Natural killer cell (primary cell): ENCODE measurements at regions of chr3 and their contacts with region 1.

Region 1: GRCh38 chr3:160399125-160400029 is at the starts of genes IFT80 and SMC4:
- DNase-seq: peak; percentile 95 to 98
- ATAC-seq: peak; percentile 93 to 99 (median 95)
- H3K4me3 ChIP-seq: peak within 1 kb of the TSS; percentile 94
- H3K4me3 Mint-ChIP-seq: peak within 1 kb of the TSS; percentile 99
- H3K27ac ChIP-seq: peak within 1 kb of the TSS; percentile 71
- H3K27ac Mint-ChIP-seq: peak within 1 kb of the TSS; percentile 98 to 100
- H3K4me1 ChIP-seq: peaks cover 13% of the 10 kb centered on the region
- H3K4me1 Mint-ChIP-seq: peaks cover 46 to 53% of the 10 kb centered on the region in 2 donors
- H3K27me3 ChIP-seq: no peaks in the 10 kb centered on the region
- H3K27me3 Mint-ChIP-seq: no peaks in the 10 kb centered on the region
- CTCF ChIP-seq: no peak
- total RNA-seq, gene IFT80: 22.6 to 22.9 (median 22.9) TPM
- total RNA-seq, gene SMC4: 83.4 to 99.3 (median 92.0) TPM

Region 2: DNA sequence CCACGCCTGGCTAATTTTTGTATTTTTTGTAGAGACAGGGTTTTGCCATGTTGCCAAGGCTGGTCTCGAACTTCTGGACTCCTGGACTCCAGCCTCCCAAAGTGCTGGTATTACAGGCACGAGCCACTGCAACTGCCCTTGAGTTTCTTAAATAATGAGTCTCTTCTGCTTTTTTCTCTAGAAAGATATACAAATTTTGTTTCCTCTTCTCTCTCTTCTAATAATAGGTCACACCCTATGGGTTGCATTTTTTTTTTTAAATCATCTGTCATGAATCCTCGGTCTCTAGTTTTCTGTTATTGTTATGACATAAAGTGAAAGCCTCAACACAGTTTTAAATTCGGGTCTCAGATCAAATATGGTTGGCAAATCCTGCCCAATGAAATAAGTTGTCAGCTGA is 299.5 kb before region 1 on chr3:
- intact Hi-C with region 1: no loop called
- DNase-seq: no peak
- ATAC-seq: no peak
- H3K4me3 ChIP-seq: no peak overlapping the region
- H3K4me3 Mint-ChIP-seq: no peak overlapping the region
- H3K27ac ChIP-seq: no peak overlapping the region
- H3K27ac Mint-ChIP-seq: no peak overlapping the region
- H3K4me1 ChIP-seq: no peaks in the 10 kb centered on the region
- H3K4me1 Mint-ChIP-seq: no peaks in the 10 kb centered on the region
- H3K27me3 ChIP-seq: no peaks in the 10 kb centered on the region
- H3K27me3 Mint-ChIP-seq: peaks cover 8 to 11% of the 10 kb centered on the region in 2 donors
- CTCF ChIP-seq: no peak

Region 3: GRCh38 chr3:160449636-160450598 is 50.5 kb after region 1 on chr3 and contains the start of gene TRIM59:
- intact Hi-C with region 1: loop called (anchors 1 kb)
- DNase-seq: peak; percentile 92 to 99
- ATAC-seq: peak; percentile 95 to 98 (median 96)
- H3K4me3 ChIP-seq: peak within 1 kb of the TSS; percentile 79
- H3K4me3 Mint-ChIP-seq: peak within 1 kb of the TSS; percentile 99
- H3K27ac ChIP-seq: peak within 1 kb of the TSS; percentile 88
- H3K27ac Mint-ChIP-seq: peak within 1 kb of the TSS; percentile 94 to 99
- H3K4me1 ChIP-seq: peaks cover 7% of the 10 kb centered on the region
- H3K4me1 Mint-ChIP-seq: peaks cover 29 to 30% of the 10 kb centered on the region in 2 donors
- H3K27me3 ChIP-seq: no peaks in the 10 kb centered on the region
- H3K27me3 Mint-ChIP-seq: no peaks in the 10 kb centered on the region
- CTCF ChIP-seq: no peak
- total RNA-seq, gene TRIM59: 16.7 to 20.3 (median 17.9) TPM

Region 4: DNA sequence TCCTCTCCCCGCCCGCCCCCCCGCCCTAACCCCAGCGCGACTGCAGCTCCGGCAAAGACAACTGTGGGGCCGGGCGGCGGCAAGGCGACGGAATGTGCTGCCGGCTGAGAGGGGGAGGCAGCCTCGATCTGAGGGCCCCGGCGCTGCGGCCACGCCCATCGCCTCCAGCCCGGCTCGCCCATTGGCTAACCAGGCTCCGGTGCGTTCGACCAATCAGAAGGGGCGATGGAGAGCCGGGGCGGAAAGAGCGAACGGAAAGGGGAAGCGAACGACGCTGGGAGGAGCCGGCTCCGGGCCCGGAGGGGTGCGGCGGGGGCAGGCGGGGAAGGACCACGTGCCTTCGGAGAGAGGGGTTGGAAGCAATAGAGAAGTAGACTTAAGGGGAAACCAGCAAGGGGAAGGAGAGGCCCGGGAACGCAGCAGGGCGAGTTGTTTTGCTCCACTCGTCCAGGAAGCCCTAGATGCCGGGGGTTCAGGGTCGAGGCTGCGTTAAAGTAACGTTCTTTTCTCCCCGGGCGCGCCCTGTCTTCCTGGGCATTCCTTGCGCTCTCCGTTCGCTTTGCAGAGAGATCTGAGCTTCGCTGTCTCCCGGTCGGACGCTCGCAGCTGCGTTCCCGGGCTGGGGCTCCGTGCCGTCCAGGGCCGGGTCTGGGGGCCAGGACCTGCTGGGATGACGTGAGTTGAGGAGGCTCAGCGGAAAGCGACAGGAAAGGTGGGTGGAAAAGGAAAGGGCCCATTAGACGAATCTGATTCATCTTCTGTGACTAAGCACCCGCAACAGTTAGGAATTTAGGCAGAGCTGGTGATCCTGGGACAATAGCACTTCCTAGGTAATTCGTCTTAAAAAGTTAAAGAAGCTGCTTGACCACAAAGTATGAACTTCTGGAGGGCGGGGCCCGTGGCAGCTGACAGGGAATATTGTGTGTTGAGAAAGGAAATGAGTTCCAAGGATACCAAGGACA is 166.3 kb after region 1 on chr3 and contains the start of gene KPNA4:
- intact Hi-C with region 1: loop called (anchors 2 kb)
- DNase-seq: peak; percentile 97 to 98
- ATAC-seq: peak; percentile 85 to 96 (median 89)
- H3K4me3 ChIP-seq: peak within 1 kb of the TSS; percentile 86
- H3K4me3 Mint-ChIP-seq: peak within 1 kb of the TSS; percentile 95
- H3K27ac ChIP-seq: peak within 1 kb of the TSS; percentile 98
- H3K27ac Mint-ChIP-seq: peak within 1 kb of the TSS; percentile 91 to 99
- H3K4me1 ChIP-seq: peaks cover 14% of the 10 kb centered on the region
- H3K4me1 Mint-ChIP-seq: peaks cover 53 to 62% of the 10 kb centered on the region in 2 donors
- H3K27me3 ChIP-seq: no peaks in the 10 kb centered on the region
- H3K27me3 Mint-ChIP-seq: no peaks in the 10 kb centered on the region
- CTCF ChIP-seq: no peak
- total RNA-seq, gene KPNA4: 69.1 to 81.7 (median 74.1) TPM

Region 5: DNA sequence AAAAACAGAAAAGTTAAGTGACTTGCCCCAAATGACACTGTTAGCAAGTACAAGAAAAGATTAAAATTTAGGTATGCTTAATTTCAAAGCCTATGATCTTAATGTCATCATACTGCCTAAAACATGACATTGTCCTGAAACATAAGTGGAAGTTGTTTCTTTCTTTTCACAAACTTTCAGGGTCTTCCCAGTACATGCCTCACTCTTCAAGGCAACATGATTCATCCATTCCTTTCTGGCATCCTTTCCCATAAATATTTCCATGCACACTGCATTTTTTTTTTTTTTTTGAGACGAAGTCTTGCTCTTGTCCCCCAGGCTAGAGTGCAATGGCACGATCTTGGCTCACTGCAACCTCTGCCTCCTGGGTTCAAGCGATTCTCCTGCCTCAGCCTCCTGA is 208.4 kb after region 1 on chr3:
- intact Hi-C with region 1: no loop called
- DNase-seq: no peak
- ATAC-seq: no peak
- H3K4me3 ChIP-seq: no peak overlapping the region
- H3K4me3 Mint-ChIP-seq: no peak overlapping the region
- H3K27ac ChIP-seq: no peak overlapping the region
- H3K27ac Mint-ChIP-seq: no peak overlapping the region
- H3K4me1 ChIP-seq: no peaks in the 10 kb centered on the region
- H3K4me1 Mint-ChIP-seq: no peaks in the 10 kb centered on the region
- H3K27me3 ChIP-seq: peaks cover 2% of the 10 kb centered on the region
- H3K27me3 Mint-ChIP-seq: peaks cover 13 to 20% of the 10 kb centered on the region in 2 donors
- CTCF ChIP-seq: no peak

Region 6: DNA sequence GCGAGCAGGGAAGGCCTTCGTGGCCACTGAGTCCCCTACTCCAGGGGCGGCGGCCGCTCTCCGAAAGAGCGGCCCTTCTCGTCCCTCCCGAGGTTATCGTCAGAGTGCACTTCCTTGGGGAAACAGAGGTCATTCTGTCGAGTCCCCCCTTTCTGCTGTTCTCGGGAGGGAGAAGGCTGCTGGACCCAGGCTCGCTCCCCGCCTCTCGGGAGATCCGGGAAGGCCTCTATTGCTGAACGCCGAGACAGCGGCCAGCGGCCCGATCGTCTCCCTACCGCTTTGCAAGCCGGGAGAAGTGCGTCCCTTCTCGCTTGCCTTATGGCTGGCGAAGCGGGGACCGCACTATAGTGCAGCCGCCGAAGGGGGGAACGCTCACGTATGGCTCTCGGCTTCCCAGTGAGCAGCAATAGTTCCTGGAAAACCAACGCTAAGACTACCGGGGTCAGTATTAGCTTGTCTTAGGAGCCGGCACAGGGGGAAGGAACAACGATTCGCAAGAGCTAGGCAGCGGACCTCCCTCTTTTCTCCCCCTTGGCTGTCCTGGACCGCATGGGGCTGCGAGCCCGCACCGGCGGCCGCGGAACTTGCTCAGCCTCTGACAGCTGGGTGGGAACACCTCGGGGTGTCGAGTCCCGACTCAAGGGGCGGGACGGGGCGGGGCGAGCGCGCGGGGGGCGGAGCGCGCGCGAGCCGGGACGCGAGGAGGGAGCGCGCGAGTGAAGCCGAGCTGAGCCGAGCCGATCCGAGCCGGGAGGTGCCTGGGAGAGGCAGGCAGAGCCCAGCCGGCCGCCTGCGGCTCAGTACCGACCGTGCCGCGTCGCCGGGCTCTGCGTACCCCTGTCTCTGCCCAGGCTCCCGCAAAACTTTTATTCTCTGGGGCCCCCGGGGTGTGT is 355.7 kb after region 1 on chr3:
- intact Hi-C with region 1: loop called (anchors 2 kb)
- DNase-seq: peak; percentile 81 to 94
- ATAC-seq: peak; percentile 83 to 93 (median 84)
- H3K4me3 ChIP-seq: peak overlapping the region; percentile 93
- H3K4me3 Mint-ChIP-seq: peak overlapping the region; percentile 97
- H3K27ac ChIP-seq: peak overlapping the region; percentile 78
- H3K27ac Mint-ChIP-seq: peak overlapping the region; percentile 91 to 92
- H3K4me1 ChIP-seq: peaks cover 28% of the 10 kb centered on the region
- H3K4me1 Mint-ChIP-seq: peaks cover 52 to 54% of the 10 kb centered on the region in 2 donors
- H3K27me3 ChIP-seq: no peaks in the 10 kb centered on the region
- H3K27me3 Mint-ChIP-seq: no peaks in the 10 kb centered on the region
- CTCF ChIP-seq: no peak

Region 7: DNA sequence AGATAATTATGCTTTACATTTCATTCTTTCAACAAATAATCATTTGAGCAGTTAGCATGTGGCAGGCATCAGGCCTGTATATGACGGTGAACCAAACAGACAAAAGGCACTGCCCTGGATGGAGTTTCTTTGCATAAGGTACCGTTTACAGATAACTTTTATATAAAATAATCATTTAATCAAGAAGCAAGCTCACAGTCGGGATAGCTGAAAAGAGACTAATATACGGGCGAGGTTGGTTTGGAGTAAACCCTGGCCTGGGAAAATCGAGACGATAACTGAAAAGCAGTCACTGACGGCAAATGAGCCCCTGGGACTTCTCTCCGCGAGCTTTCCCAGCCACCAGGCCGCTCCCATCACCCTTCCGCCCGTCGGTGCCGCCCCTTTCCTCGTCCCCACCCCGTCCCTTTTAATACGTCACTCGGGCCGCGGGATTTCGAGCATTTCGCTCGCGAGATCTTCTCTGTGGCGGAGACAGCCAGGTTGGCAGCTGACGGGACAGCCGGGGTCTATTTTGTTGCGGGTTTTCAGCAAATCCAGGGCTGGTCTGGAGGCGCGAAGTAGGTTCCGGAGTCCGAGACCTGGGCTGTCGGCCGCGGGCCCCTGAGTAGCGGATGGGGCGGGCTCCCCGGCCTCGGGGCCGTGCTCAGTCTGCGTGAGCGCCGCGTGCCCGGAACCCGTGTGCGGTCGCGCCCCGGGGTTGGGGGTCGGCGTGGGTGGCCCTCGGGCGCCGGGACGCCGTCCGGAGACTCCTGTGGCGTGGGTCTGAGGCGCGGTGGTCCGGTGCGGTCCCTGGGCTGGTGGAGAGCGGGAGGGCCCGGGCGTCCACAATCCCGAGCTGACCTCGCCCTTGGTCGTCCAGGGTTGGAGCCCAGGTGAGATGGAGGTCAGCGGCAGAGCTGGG is 821.7 kb after region 1 on chr3 and contains the start of gene NMD3:
- intact Hi-C with region 1: loop called (anchors 5 kb)
- DNase-seq: peak; percentile 89 to 95
- ATAC-seq: peak; percentile 96 to 97 (median 96)
- H3K4me3 ChIP-seq: peak within 1 kb of the TSS; percentile 89
- H3K4me3 Mint-ChIP-seq: peak within 1 kb of the TSS; percentile 94
- H3K27ac ChIP-seq: peak within 1 kb of the TSS; percentile 77
- H3K27ac Mint-ChIP-seq: peak within 1 kb of the TSS; percentile 88 to 94
- H3K4me1 ChIP-seq: peaks cover 13% of the 10 kb centered on the region
- H3K4me1 Mint-ChIP-seq: peaks cover 32 to 38% of the 10 kb centered on the region in 2 donors
- H3K27me3 ChIP-seq: no peaks in the 10 kb centered on the region
- H3K27me3 Mint-ChIP-seq: peaks cover 9 to 15% of the 10 kb centered on the region in 2 donors
- CTCF ChIP-seq: no peak
- total RNA-seq, gene NMD3: 40.7 to 51.1 (median 43.6) TPM